Transverse colon (tissue), 4 donors: ENCODE measurements at regions of chr15 and their contacts with region 1.

Region 1: DNA sequence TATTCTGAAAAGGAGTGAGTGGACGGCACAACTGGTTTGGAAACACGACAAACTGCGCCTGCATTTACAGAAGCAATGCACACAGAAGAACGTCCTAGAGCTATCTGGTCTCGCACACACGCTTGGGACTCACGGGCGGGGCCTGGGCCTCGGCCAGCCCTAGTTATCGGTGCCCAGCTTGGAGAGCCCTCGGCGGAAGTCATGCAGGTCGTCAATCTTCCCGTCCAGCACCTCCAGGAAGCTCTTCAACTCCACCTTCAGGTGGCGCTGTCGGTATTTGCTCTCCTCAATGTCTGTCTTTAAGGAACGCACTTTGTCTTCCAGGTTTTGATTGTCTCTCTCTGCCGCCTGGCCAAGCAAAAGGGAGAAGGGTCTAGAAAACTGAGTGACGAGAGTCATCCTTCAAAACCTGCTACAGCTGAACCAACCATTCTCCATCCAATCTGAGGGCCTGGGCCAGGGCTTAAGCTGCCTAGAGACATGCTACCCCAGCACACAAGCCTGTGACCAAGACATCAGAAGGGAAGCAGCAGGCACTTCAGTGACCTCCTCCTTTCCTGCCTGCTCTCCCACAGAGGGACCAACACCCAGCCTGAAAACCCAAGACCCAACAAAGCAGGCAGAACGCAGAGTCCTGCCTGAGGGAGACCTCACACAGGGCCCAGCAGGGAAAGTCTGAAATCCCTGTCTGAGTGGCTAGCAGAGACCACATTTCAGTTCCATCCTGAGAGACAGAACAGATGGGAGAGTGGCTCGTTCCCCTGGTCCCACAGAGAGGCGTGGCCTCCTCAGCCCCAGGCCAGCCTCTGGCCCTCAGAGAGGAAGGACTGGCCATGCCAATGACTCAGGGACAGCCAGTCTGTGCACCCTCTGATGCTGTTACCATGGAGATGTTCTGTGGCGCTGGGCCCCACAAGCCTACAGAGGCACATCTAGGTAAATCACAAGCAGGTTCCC is 40.4 kb downstream of the WHAMM start:
- DNase-seq: peak; percentile 81
- H3K4me3 ChIP-seq: no peak overlapping the region
- H3K27ac ChIP-seq: peak overlapping the region in 3 of 4 donors; percentile 10 to 42 (median 18)
- H3K4me1 ChIP-seq: peaks cover 0 to 11% (median 4%) of the 10 kb centered on the region in 4 donors
- H3K27me3 ChIP-seq: no peaks in the 10 kb centered on the region
- CTCF ChIP-seq: peak; percentile 59 to 77 (median 65)
- EP300 ChIP-seq: no peak
- POLR2A ChIP-seq: no peak

Region 2: GRCh38 chr15:82802497-82802896 is 47.3 kb before region 1 on chr15:
- in situ Hi-C with region 1: no loop called
- intact Hi-C with region 1: no loop called
- DNase-seq: no peak
- H3K4me3 ChIP-seq: no peak overlapping the region
- H3K27ac ChIP-seq: no peak overlapping the region
- H3K4me1 ChIP-seq: no peaks in the 10 kb centered on the region
- H3K27me3 ChIP-seq: no peaks in the 10 kb centered on the region
- CTCF ChIP-seq: no peak
- EP300 ChIP-seq: no peak
- POLR2A ChIP-seq: no peak

Region 3: DNA sequence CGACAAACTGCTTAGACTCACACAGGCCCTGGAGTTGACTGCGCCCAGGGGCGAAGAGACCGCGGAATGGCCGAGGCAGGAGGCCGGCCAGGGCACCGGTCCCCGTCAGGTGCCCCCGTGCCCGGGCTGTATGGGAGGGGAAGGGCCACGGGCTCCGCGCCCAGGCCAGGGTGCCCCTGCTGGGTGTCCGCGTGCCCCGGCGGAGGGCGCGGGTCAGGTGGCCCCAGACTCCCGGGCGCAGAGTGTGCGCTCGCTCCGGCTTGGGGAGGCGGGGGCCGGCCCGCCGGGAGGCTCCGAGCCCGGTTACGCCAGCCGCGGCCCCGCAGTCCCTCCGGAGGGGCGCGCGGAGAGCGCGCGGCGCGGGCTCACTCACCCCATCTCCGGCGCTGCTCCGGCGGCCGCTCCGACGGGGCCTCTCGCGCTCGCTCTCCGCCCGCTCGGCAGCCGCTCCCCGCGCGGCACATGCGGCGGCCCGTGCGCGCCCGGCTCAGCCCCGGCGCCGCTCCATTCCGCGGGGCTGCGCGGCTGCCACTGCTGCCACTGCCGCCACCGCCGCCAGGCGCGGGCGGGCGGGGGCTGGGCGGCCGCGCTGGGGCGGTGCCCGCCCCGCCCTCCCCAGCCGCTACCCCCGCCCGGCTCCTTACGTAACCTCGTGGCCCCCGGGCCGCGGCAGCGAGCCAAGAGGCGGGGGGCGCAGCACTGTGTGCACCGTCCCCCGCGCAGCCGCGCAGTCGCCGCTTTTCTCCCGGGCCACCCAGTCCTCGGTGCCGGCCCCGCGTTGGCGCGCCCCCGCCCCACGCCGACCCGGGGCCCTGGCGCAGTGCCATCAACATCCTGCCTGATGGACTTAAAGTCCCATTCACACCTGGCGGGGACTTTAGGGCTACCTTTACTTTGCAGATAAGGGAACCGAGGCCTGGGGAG is 102.6 kb after region 1 on chr15 and contains the start of gene HOMER2:
- in situ Hi-C with region 1: loop called in 1 of 4 experiments (anchors 25 kb)
- intact Hi-C with region 1: no loop called
- DNase-seq: peak; percentile 15
- H3K4me3 ChIP-seq: peak within 1 kb of the TSS; percentile 29 to 65 (median 44)
- H3K27ac ChIP-seq: peak within 1 kb of the TSS; percentile 38 to 48 (median 42)
- H3K4me1 ChIP-seq: peaks cover 0 to 12% (median 6%) of the 10 kb centered on the region in 4 donors
- H3K27me3 ChIP-seq: peaks cover 36% of the 10 kb centered on the region
- CTCF ChIP-seq: no peak
- EP300 ChIP-seq: no peak
- POLR2A ChIP-seq: no peak
- total RNA-seq, gene HOMER2: 0.40 to 25.1 (median 6.1) TPM

Region 4: GRCh38 chr15:82999905-83000671 is 150.3 kb after region 1 on chr15:
- in situ Hi-C with region 1: loop called in 2 of 4 experiments (anchors 10 to 25 kb)
- intact Hi-C with region 1: loop called (anchors 10 kb)
- DNase-seq: no peak
- H3K4me3 ChIP-seq: peak overlapping the region in 1 of 4 donors; percentile 31
- H3K27ac ChIP-seq: peak overlapping the region in 2 of 4 donors; percentile 32 to 33
- H3K4me1 ChIP-seq: peaks cover 0 to 9% (median 3%) of the 10 kb centered on the region in 4 donors
- H3K27me3 ChIP-seq: no peaks in the 10 kb centered on the region
- CTCF ChIP-seq: peak; percentile 19 to 41 (median 26)
- EP300 ChIP-seq: no peak
- POLR2A ChIP-seq: no peak

Region 5: DNA sequence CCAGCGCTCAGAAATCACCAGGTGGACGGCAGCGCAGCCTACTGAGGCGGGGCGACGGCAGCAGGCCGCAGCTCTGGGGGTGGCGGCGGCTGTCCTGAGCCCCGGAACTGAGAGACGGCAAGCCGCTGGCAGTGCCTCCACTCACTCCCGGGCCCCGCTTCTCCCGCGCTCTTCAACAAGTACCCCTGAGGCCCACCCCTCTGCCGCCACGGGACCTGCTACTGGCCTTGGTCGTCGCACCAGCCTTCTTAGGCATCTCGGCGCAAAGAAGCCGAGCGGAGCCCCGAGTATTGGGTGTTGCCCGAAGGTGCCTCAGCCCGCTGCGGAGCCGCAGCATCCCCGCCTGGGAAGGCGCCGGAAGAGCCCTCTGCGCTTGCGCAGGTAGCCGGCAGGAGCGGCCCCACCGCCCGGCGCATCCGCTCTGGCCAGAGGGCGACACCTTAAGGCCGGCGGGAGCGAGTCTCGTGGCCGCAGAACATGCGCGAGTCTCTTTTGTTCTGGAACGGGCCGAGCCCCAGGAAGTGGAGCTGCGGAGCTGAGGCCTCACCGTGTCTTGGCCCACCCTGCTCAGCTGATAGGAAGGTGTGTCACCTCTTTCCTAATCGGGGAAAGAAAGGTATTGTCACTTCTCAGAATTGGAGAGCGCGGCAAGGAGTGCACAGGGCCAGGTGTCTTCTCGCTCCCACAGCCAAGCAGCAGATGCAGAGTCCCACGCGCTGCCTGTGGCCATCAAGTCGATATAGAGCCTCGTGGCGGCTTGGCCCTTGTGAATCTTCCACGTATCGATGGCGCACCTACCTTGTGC is 161.6 kb after region 1 on chr15 and contains the start of gene C15orf40:
- in situ Hi-C with region 1: loop called in 2 of 4 experiments (anchors 10 to 25 kb)
- intact Hi-C with region 1: no loop called
- DNase-seq: peak; percentile 92
- H3K4me3 ChIP-seq: peak within 1 kb of the TSS; percentile 71 to 92 (median 86)
- H3K27ac ChIP-seq: peak within 1 kb of the TSS; percentile 82 to 95 (median 92)
- H3K4me1 ChIP-seq: peaks cover 12 to 25% (median 14%) of the 10 kb centered on the region in 4 donors
- H3K27me3 ChIP-seq: no peaks in the 10 kb centered on the region
- CTCF ChIP-seq: peak; percentile 46 to 66 (median 57)
- EP300 ChIP-seq: no peak
- POLR2A ChIP-seq: peak; percentile 82
- total RNA-seq, gene C15orf40: 10.6 to 42.8 (median 18.9) TPM